ENCODE measurements at regions of chrX and their contacts with region 1.

Region 1: DNA sequence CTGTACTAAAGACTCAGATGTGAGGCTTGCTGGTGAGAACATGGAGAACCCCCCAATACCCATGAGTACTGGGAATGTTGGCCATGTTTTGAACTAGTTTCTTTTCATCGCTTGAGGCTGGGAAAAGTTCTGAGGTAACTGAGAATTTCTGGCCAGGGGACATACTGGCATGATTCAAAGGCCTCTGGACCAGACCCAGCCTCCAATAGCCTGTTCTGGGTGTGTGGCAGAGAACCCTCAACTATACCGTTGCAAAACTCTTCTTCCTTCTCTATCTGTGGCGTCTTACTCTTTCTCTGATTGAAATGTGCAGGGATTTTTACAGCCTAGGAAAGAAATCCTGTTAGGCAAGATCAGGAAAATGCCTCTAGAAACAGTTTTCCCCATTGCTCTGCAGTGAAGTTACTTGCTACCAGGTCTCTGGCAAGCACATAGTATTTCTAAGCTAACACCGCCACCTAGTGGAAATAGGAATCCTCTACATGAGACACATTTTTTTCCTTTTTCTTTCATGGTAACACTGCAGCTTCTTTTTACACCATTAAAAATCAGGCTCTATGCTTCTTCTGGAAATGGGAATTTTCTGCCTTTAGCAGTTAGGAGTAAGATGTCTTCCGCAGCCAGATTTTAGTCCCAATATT is 170.7 kb upstream of the ZCCHC13 start:
- DNase-seq: no peak
- H3K4me3 Mint-ChIP-seq: no peak overlapping the region
- H3K27ac Mint-ChIP-seq: no peak overlapping the region
- H3K4me1 Mint-ChIP-seq: no peaks in the 10 kb centered on the region
- H3K27me3 Mint-ChIP-seq: no peaks in the 10 kb centered on the region

Region 2: GRCh38 chrX:72245461-72246089 is 1887.7 kb before region 1 on chrX:
- intact Hi-C with region 1: loop called (anchors 10 kb)
- DNase-seq: peak; percentile 8
- H3K4me3 Mint-ChIP-seq: no peak overlapping the region
- H3K27ac Mint-ChIP-seq: no peak overlapping the region
- H3K4me1 Mint-ChIP-seq: peaks cover 5% of the 10 kb centered on the region
- H3K27me3 Mint-ChIP-seq: no peaks in the 10 kb centered on the region

Region 3: DNA sequence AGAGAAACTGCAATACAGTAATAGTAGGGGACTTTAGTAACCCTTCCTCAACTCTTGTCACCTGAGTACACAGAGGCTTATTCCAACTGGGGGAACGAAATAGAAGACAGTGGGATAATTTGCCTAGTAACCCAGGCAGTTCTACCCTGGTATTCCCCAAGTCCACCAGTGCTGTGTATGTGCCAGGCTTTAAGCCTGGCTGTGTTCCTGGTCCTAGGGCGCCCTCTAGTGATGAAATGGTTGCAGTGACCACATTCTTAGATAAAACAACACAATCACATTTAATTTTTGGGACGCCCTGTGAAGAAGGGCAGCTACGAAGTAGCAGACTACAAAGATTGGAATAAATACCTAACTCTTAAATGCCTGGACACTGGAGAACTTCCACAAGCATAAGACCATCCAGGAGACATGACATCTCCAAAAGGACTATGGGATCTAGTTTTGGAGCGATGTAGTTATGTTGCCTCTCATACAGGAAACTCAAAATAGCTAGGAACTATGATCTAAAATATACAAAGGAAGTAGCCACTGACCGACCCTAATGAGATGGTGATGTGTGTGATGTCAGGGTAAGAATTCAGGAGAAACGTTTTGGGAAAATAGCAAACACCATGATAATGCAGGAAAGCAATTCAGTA is 117.8 kb before region 1 on chrX:
- intact Hi-C with region 1: loop called (anchors 1 kb)
- DNase-seq: peak; percentile 28
- H3K4me3 Mint-ChIP-seq: no peak overlapping the region
- H3K27ac Mint-ChIP-seq: no peak overlapping the region
- H3K4me1 Mint-ChIP-seq: peaks cover 9% of the 10 kb centered on the region
- H3K27me3 Mint-ChIP-seq: no peaks in the 10 kb centered on the region

Region 4: DNA sequence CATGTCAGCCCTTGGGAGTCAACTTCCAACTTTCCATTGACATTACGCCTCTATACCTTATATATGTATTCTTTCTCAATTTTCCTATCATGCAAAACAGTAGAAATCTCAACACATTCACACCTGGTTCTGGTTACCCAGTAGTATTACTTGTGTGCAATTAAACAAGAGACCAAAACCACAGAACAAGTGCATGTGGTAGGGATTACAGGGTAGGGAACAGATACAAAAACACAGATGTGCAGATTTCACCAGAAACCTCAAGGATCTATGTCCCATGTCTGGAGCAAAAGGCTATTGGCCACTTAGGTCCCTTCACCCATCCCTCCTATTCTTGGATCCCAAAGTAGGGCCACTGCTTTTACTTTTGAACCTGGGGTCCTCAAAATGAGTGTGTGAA is 27.1 kb after region 1 on chrX:
- intact Hi-C with region 1: no loop called
- DNase-seq: no peak
- H3K4me3 Mint-ChIP-seq: no peak overlapping the region
- H3K27ac Mint-ChIP-seq: no peak overlapping the region
- H3K4me1 Mint-ChIP-seq: no peaks in the 10 kb centered on the region
- H3K27me3 Mint-ChIP-seq: no peaks in the 10 kb centered on the region

Region 5: DNA sequence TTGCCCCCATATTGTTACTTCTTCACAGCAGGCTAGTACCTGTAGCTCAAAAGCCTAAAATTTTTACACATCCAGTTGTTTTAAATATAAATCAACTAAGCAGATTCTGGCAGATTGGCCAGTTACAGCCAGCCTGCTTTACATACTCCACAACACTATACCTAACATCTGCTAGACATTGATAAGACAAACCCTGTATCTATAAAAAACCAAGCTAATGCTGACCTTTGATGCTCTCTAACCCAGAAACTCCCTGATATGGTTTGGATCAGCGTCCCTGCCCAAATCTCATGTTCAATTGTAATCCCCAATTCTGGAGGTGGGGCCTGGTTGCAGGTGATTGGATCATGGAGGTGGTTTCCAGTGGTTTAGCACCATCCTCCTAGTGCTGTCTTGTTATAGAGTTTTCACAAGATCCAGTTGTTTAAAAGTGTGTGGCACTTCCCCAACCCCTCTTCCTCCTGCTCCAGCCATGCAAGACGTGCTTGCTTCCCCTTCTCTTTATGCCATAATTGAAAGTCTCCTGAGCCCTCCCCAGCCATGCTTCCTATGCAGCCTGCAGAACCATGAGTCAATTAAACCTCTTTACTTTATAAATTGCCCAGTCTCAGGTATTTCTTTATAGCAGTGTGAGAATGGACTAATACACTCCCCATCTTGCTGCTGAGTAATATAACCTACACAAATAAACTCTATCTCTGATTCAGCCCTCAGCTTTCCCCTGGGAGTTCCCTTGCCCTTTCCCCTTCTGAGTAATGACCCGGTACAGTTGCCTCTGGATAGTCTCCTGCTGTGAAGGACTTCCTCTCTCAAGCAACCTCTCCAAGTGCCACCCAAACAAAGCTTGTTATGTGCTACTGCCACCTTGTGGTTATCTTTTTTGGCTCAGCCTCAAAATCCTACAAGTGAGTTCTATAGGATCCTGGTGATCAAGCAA is 210.3 kb after region 1 on chrX:
- intact Hi-C with region 1: loop called (anchors 1 kb)
- DNase-seq: peak; percentile 21
- H3K4me3 Mint-ChIP-seq: no peak overlapping the region
- H3K27ac Mint-ChIP-seq: no peak overlapping the region
- H3K4me1 Mint-ChIP-seq: no peaks in the 10 kb centered on the region
- H3K27me3 Mint-ChIP-seq: no peaks in the 10 kb centered on the region

Measured in activated T-helper 1 cell treated with anti-CD3 and anti-CD28 coated beads, Interleukin-12 subunit alpha, Interleukin-12 subunit beta, Interleukin-2, Interleukin-4 antibody, amounts not matched to agents 30 ng/mL and 10 ng/mL and 1 ng/mL, durations not matched to agents 14 hours and 24 hours and 36 hours (primary cell).